Activated T-helper 2 cell treated with anti-CD3 and anti-CD28 coated beads, Interferon-gamma antibody, Interleukin-2, Interleukin-4, amounts not matched to agents 10 μg/mL and 5 μg/mL and 100 μg/mL, durations not matched to agents 14 hours and 24 hours and 36 hours (primary cell): ENCODE measurements at regions of chr4 and their contacts with region 1.

Region 1: DNA sequence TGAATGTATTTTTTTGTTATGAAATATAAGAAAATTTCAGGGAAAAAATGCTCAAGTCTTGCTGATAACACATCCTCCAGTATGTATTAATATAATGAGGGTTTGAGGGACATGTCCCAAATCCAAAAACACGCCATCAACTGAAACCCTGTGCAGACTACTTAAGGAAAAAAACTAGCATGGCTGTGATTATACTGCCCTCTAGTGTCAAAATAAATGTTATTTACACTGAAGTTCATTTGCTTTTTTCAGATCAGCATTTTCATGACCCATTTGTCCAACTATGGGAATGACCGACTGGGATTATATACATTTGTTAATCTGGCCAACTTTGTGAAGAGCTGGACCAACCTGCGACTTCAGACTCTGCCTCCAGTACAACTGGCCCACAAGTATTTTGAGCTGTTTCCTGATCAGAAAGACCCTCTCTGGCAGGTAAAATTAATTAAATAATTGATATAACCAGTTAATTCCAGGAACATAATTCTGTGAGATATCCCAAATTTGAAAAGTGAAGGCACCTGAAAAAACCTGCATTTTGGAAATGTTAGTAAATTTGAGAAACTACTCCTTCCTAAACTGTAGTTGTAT is 128.5 kb downstream of the PRSS12 start:
- DNase-seq: no peak
- H3K4me3 Mint-ChIP-seq: no peak overlapping the region
- H3K27ac Mint-ChIP-seq: no peak overlapping the region
- H3K4me1 Mint-ChIP-seq: peaks cover 17% of the 10 kb centered on the region
- H3K27me3 Mint-ChIP-seq: peaks cover 10% of the 10 kb centered on the region

Region 2: GRCh38 chr4:117447925-117448324 is 776.4 kb before region 1 on chr4:
- intact Hi-C with region 1: loop called (anchors 1 kb)
- DNase-seq: peak; percentile 9
- H3K4me3 Mint-ChIP-seq: no peak overlapping the region
- H3K27ac Mint-ChIP-seq: no peak overlapping the region
- H3K4me1 Mint-ChIP-seq: no peaks in the 10 kb centered on the region
- H3K27me3 Mint-ChIP-seq: no peaks in the 10 kb centered on the region

Region 3: GRCh38 chr4:117971403-117971802 is 252.9 kb before region 1 on chr4:
- intact Hi-C with region 1: no loop called
- DNase-seq: no peak
- H3K4me3 Mint-ChIP-seq: no peak overlapping the region
- H3K27ac Mint-ChIP-seq: no peak overlapping the region
- H3K4me1 Mint-ChIP-seq: no peaks in the 10 kb centered on the region
- H3K27me3 Mint-ChIP-seq: no peaks in the 10 kb centered on the region

Region 4: GRCh38 chr4:118018381-118019145 is 205.8 kb before region 1 on chr4:
- intact Hi-C with region 1: loop called (anchors 5 kb)
- DNase-seq: no peak
- H3K4me3 Mint-ChIP-seq: no peak overlapping the region
- H3K27ac Mint-ChIP-seq: no peak overlapping the region
- H3K4me1 Mint-ChIP-seq: no peaks in the 10 kb centered on the region
- H3K27me3 Mint-ChIP-seq: no peaks in the 10 kb centered on the region

Region 5: GRCh38 chr4:118034053-118034785 is 190.1 kb before region 1 on chr4 and contains the start of gene NDST3:
- intact Hi-C with region 1: loop called (anchors 5 kb)
- DNase-seq: no peak
- H3K4me3 Mint-ChIP-seq: peak within 1 kb of the TSS; percentile 69
- H3K27ac Mint-ChIP-seq: no peak within 1 kb of the TSS
- H3K4me1 Mint-ChIP-seq: peaks cover 7% of the 10 kb centered on the region
- H3K27me3 Mint-ChIP-seq: peaks cover 52% of the 10 kb centered on the region
- total RNA-seq, gene NDST3: 0.07 TPM in 1 of 2 replicates, not detected in the other

Region 6: GRCh38 chr4:118076958-118077766 is 147.2 kb before region 1 on chr4:
- intact Hi-C with region 1: loop called (anchors 1 kb)
- DNase-seq: no peak
- H3K4me3 Mint-ChIP-seq: no peak overlapping the region
- H3K27ac Mint-ChIP-seq: no peak overlapping the region
- H3K4me1 Mint-ChIP-seq: peaks cover 12% of the 10 kb centered on the region
- H3K27me3 Mint-ChIP-seq: peaks cover 7% of the 10 kb centered on the region

Region 7: DNA sequence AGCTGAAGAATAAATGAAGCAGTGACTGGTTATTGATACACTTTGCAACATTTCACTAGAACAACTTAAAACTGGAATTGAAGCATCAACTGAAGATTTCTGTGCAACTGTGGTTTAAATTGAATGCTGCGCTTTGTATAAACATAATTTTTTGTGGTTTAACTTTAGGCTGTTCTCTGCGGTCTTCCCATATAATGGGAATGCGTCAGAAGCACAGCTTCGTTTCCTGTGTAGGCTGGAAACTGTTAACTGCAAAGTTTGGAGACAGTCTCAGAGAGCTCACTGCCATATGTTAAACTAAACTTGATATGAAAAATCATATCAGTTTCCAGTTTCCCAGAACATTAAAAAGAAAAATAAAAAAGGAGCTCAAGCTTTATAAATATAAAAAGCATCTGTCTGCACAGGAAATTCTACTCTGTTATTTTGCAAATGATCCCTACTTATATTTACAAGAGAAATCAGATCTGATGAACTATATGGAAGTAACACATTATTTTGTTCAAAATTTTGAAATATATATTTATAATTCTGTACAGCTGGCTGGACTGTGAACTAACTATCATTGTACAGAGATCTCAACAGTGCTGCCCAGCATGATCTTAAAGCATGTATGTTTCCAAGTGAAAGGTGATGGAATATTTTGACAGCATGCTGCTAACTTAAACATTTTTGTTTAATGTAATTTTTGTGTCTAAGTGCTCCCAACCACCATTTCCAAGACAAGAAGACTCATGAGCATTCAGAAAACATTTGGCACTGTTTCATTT is 50.2 kb before region 1 on chr4:
- intact Hi-C with region 1: loop called (anchors 1 kb)
- DNase-seq: no peak
- H3K4me3 Mint-ChIP-seq: no peak overlapping the region
- H3K27ac Mint-ChIP-seq: peak overlapping the region; percentile 77
- H3K4me1 Mint-ChIP-seq: peaks cover 48% of the 10 kb centered on the region
- H3K27me3 Mint-ChIP-seq: peaks cover 5% of the 10 kb centered on the region

Region 8: DNA sequence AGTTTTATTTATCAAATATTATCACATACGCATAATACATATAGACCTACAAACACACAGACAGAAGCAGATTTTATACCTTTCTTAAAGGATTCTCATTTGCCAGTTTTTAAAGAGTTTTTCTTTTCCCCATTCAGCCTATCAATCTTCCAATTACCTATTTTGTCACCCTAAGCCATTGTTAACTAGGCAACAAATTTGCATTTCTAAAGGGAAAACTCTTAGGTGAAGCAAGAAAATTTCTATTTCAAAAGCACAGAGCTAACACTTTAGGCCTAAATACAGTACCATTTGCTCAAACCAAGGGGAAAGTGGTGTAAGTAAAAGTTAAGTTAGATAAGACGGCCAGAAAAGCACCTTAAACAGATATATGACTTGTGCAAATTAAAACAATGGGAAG is 33.4 kb before region 1 on chr4:
- intact Hi-C with region 1: no loop called
- DNase-seq: no peak
- H3K4me3 Mint-ChIP-seq: no peak overlapping the region
- H3K27ac Mint-ChIP-seq: no peak overlapping the region
- H3K4me1 Mint-ChIP-seq: no peaks in the 10 kb centered on the region
- H3K27me3 Mint-ChIP-seq: no peaks in the 10 kb centered on the region